Naive thymus-derived CD4-positive, alpha-beta T cell (primary cell): ENCODE measurements at regions of chr16 and their contacts with region 1.

Region 1: GRCh38 chr16:66894948-66895688 is 14.8 kb downstream of the PDP2 start:
- DNase-seq: peak; percentile 22 to 63 (median 51)
- ATAC-seq: peak; percentile 90
- H3K4me3 ChIP-seq: no peak overlapping the region
- H3K4me3 Mint-ChIP-seq: no peak overlapping the region
- H3K27ac ChIP-seq: no peak overlapping the region
- H3K27ac Mint-ChIP-seq: peak overlapping the region in 1 of 9 donors; percentile 71
- H3K4me1 ChIP-seq: peaks cover 0 to 3% of the 10 kb centered on the region in 2 donors
- H3K4me1 Mint-ChIP-seq: peaks cover 0 to 28% (median 12%) of the 10 kb centered on the region in 7 donors
- H3K27me3 ChIP-seq: no peaks in the 10 kb centered on the region
- H3K27me3 Mint-ChIP-seq: no peaks in the 10 kb centered on the region

Region 2: DNA sequence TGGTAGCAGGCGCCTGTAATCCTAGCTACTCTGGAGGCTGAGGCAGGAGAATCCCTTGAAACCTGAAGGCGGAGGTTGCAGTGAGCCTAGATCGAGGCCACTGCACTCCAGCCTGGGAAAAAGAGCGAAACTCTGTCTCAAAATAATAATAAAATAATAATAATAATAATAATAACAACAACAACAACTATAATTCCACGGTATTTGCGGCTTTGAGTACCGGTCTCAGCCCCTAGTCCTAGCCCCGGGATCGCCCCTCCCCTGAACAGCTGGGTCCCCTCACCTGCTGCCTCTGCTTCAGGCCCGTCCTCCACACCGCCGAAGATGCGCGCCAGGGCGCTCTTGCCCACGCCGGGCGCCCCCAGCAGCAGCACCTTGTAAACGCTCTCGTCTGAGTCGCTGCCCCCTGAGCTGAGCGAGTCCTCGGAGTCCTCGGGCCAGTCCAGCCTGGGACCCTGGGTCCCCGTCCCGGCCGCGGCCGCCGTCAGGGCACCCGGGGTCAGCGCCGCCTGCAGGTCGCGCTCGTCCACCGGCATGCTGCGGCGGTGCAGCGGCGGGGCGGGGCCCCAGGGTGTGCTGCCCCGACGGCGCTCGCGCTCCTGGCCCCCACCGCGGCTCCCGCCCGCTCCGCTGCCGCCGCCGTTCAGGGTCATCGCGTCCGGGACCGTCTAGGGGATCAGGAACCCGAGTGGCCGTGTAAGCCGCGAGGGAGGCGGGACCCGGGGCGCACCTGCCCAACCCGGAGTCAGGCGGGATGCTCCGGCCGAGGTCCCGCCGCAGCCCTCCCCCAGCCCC is 29.6 kb after region 1 on chr16:
- CTCF ChIA-PET with region 1: interaction called, 4 read pairs
- POLR2A ChIA-PET with region 1: no interaction called
- intact Hi-C with region 1: loop called in 1 of 2 experiments (anchors 1 kb)
- DNase-seq: peak in 5 of 9 donors; percentile 18 to 71 (median 34)
- ATAC-seq: peak; percentile 79
- H3K4me3 ChIP-seq: no peak overlapping the region
- H3K4me3 Mint-ChIP-seq: peak overlapping the region in 8 of 10 donors; percentile 33 to 74 (median 64)
- H3K27ac ChIP-seq: no peak overlapping the region
- H3K27ac Mint-ChIP-seq: no peak overlapping the region
- H3K4me1 ChIP-seq: no peaks in the 10 kb centered on the region
- H3K4me1 Mint-ChIP-seq: peaks cover 0 to 24% (median 5%) of the 10 kb centered on the region in 7 donors
- H3K27me3 ChIP-seq: peaks cover 0 to 13% of the 10 kb centered on the region in 2 donors
- H3K27me3 Mint-ChIP-seq: peaks cover 18 to 43% (median 22%) of the 10 kb centered on the region in 5 donors

Region 3: DNA sequence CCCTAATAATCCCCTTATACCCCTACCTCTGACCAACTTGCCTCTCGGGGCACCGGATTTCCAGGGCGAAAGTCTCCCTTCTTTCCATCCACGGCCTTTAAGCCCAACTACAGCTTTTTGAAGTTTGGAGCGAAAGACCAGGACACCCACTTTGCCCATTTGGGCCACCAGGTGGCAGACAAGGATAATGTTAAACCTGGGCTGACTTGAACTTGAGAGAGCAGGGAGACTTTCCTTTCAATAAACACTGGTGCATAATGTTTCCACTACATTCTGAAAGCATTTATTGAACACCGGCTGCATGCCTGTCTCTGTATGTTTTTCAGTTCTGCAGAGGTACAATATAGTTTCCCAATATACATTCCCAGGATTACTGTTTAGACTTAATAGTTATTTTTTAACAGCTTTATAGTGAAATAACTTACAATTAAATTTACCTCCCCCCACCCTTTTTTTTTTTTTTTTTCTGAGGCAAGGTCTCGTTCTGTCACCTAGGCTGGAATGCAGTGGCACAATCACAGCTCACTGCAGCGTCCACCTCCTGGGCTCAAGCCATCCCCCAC is 59.1 kb after region 1 on chr16:
- CTCF ChIA-PET with region 1: no interaction called
- POLR2A ChIA-PET with region 1: no interaction called
- intact Hi-C with region 1: loop called (anchors 1 to 5 kb)
- DNase-seq: peak; percentile 46 to 78 (median 67)
- ATAC-seq: peak; percentile 86
- H3K4me3 ChIP-seq: no peak overlapping the region
- H3K4me3 Mint-ChIP-seq: peak overlapping the region in 1 of 10 donors; percentile 5
- H3K27ac ChIP-seq: no peak overlapping the region
- H3K27ac Mint-ChIP-seq: peak overlapping the region in 1 of 9 donors; percentile 4
- H3K4me1 ChIP-seq: no peaks in the 10 kb centered on the region
- H3K4me1 Mint-ChIP-seq: peaks cover 11 to 27% (median 15%) of the 10 kb centered on the region in 7 donors
- H3K27me3 ChIP-seq: no peaks in the 10 kb centered on the region
- H3K27me3 Mint-ChIP-seq: peaks cover 31 to 40% (median 35%) of the 10 kb centered on the region in 5 donors